IMR-90 (cell line): ENCODE measurements at regions of chr12 and their contacts with region 1.

Region 1: DNA sequence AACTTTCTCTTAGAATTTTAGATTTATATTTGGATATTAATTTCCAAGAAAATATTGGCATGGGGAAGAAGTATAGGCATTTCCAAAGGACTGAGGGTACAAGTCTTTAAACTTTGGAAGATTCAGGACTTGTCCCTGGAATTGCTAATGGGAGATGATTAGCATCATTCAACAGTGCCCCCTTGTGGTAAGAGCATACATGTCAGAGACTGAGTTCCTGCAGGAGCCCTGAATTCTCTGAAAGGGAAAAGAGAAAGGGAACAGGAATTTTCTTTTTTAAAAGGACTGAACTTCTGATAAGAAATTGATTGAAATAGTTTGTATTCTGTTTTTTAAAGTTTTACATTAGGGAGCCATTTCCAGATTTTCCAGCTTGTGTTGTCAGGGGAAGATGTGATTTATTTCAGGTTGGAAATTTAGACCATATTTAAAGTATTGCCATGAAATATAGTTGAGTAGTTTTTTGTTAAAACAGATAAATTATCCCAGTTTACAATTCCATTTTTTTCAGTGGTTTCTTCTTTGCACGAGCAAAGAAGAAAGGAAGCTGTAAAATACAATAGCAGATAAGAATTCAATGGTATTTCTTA is 44.0 kb upstream of the REP15 start:
- DNase-seq: peak; percentile 84
- ATAC-seq: peak; percentile 95
- H3K4me3 ChIP-seq: no peak overlapping the region
- H3K27ac ChIP-seq: no peak overlapping the region
- H3K4me1 ChIP-seq: peaks cover 2% of the 10 kb centered on the region; the same call in 1 of the 2 replicates
- H3K27me3 ChIP-seq: no peaks in the 10 kb centered on the region
- CTCF ChIP-seq: peak; percentile 82
- POLR2A ChIP-seq: no peak
- RAD21 ChIP-seq: peak; percentile 86

Region 2: GRCh38 chr12:27332407-27333301 is 319.6 kb before region 1 on chr12 and contains the start of gene BMAL2:
- CTCF ChIA-PET with region 1: no interaction called
- POLR2A ChIA-PET with region 1: no interaction called
- dilution Hi-C with region 1: no loop called
- in situ Hi-C with region 1: no loop called
- intact Hi-C with region 1: loop called (anchors 5 kb)
- DNase-seq: peak; percentile 43
- ATAC-seq: peak; percentile 71
- H3K4me3 ChIP-seq: peak within 1 kb of the TSS; percentile 69
- H3K27ac ChIP-seq: peak within 1 kb of the TSS; percentile 65
- H3K4me1 ChIP-seq: peaks cover 15% of the 10 kb centered on the region
- H3K27me3 ChIP-seq: no peaks in the 10 kb centered on the region
- CTCF ChIP-seq: no peak
- POLR2A ChIP-seq: 0 out of 2 replicates have a peak, but pooled peaks have one; percentile 31
- RAD21 ChIP-seq: no peak
- total RNA-seq, gene BMAL2: 55.3 and 57.0 TPM in 2 replicates

Region 3: GRCh38 chr12:27383429-27384260 is 268.6 kb before region 1 on chr12:
- CTCF ChIA-PET with region 1: no interaction called
- POLR2A ChIA-PET with region 1: no interaction called
- dilution Hi-C with region 1: no loop called
- in situ Hi-C with region 1: no loop called
- intact Hi-C with region 1: loop called (anchors 1 kb)
- DNase-seq: peak; percentile 89
- ATAC-seq: peak; percentile 95
- H3K4me3 ChIP-seq: no peak overlapping the region
- H3K27ac ChIP-seq: no peak overlapping the region
- H3K4me1 ChIP-seq: peaks cover 1% of the 10 kb centered on the region; the same call in 1 of the 2 replicates
- H3K27me3 ChIP-seq: no peaks in the 10 kb centered on the region
- CTCF ChIP-seq: peak; percentile 86
- POLR2A ChIP-seq: no peak
- RAD21 ChIP-seq: peak; percentile 78

Region 4: GRCh38 chr12:27424631-27425230 is 227.5 kb before region 1 on chr12:
- CTCF ChIA-PET with region 1: no interaction called
- POLR2A ChIA-PET with region 1: no interaction called
- dilution Hi-C with region 1: no loop called
- in situ Hi-C with region 1: no loop called
- intact Hi-C with region 1: loop called (anchors 2 kb)
- DNase-seq: peak; percentile 58
- ATAC-seq: peak; percentile 73
- H3K4me3 ChIP-seq: no peak overlapping the region
- H3K27ac ChIP-seq: no peak overlapping the region
- H3K4me1 ChIP-seq: no peaks in the 10 kb centered on the region
- H3K27me3 ChIP-seq: no peaks in the 10 kb centered on the region
- CTCF ChIP-seq: peak; percentile 50
- POLR2A ChIP-seq: no peak
- RAD21 ChIP-seq: peak; percentile 61

Region 5: DNA sequence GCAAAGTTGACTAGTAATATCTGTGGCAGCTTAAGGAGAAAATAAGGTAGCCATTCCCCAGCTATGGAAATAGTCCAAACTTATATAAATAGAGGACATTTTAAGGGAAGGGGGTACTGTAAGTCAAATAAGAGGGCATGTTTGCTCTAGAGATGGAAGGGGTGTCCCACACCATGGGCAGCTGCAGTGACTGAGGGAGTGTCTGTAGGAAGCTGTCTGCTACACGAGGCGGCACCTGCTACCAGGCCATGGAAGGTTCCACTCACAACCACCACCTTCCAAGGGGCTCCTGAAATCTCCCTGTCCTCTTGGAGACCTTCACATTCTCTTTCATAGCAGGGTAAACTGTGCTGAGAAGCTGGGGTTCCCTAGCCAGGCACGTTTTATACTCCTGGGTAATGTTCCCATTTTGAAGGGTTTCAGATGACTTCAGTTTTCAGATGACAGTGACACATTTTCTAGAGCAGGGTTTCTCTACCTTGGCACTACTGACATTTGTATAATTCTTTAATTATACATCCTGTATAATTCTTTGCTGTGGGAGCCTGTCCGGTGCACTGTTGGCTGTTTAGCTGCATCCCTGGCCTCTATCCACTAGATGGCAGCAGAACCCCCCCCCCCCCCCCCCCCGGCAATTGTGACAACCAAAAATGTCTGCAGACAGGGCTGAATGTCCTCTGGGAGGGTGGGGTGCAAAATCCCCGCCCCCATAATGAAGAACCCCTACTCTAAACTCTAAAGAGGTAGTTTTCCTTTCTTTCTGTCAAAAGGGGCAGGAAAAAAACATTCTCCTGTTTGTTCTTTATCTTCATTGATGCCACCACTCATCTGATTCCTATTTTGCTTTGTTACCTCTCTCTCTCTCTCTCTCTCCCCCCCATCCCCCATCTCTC is 217.3 kb before region 1 on chr12:
- CTCF ChIA-PET with region 1: no interaction called
- POLR2A ChIA-PET with region 1: no interaction called
- dilution Hi-C with region 1: no loop called
- in situ Hi-C with region 1: no loop called
- intact Hi-C with region 1: loop called (anchors 2 kb)
- DNase-seq: no peak
- ATAC-seq: peak; percentile 50; the same call in 1 of the 2 replicates
- H3K4me3 ChIP-seq: no peak overlapping the region
- H3K27ac ChIP-seq: no peak overlapping the region
- H3K4me1 ChIP-seq: peaks cover 6% of the 10 kb centered on the region
- H3K27me3 ChIP-seq: no peaks in the 10 kb centered on the region
- CTCF ChIP-seq: peak; percentile 49
- POLR2A ChIP-seq: no peak
- RAD21 ChIP-seq: peak; percentile 35